SK-N-SH (cell line): ENCODE measurements at regions of chr7 and their contacts with region 1.

Region 1: DNA sequence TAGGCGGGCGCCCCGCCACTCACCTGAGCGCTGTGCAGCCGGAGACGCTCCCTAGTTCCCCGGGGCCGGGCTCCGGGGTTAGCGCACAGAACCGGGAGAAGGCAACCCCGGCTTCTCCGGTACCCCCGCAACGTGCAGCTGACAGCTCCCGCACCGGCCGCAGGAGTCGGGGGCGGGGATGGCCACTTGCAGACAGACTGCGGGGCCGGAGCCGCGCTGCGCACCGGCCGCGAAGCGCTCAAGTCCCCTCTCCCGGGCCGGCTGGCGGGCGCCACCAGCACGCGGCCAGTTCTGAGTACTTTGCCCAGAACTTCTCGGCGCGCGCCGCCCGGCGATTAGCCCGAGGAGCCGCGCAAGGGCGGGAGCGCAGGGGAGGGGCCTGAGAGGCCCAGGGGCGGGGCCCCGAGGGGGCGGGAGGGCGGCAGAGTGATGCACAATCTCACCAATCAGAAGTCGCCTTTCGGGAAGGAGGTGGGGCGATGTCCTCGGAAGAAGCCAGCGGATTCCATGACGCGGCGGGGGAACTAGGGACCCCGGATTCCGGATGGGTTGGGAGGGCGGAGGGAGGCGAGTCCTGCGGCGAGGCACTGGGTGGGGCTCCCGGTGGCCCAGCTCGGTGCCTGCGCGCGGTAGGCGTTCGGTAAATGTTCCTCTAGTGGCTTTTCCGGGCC is at the start of gene OSBPL3:
- DNase-seq: peak; percentile 100
- H3K4me3 ChIP-seq: peak within 1 kb of the TSS; percentile 73 to 97
- H3K27ac ChIP-seq: peak within 1 kb of the TSS; percentile 84 to 87
- H3K4me1 ChIP-seq: peaks cover 21 to 28% of the 10 kb centered on the region in 2 experiments; a peak in 3 of 4 replicates
- H3K27me3 ChIP-seq: no peaks in the 10 kb centered on the region
- CTCF ChIP-seq: no peak
- EP300 ChIP-seq: peak in 1 of 2 experiments; percentile 2; a peak in 1 of 4 replicates
- RAD21 ChIP-seq: peak; percentile 38
- polyA plus RNA-seq, gene OSBPL3: 22.6 and 23.2 TPM in 2 replicates

Region 2: GRCh38 chr7:24819916-24820689 is 159.9 kb before region 1 on chr7:
- CTCF ChIA-PET with region 1: interaction called, 57 read pairs
- POLR2A ChIA-PET with region 1: interaction called, 3 read pairs
- DNase-seq: peak; percentile 77
- H3K4me3 ChIP-seq: no peak overlapping the region
- H3K27ac ChIP-seq: peak overlapping the region; percentile 70 to 93; a peak in 3 of 4 replicates
- H3K4me1 ChIP-seq: peaks cover 5 to 18% of the 10 kb centered on the region in 2 experiments; a peak in 3 of 4 replicates
- H3K27me3 ChIP-seq: no peaks in the 10 kb centered on the region
- CTCF ChIP-seq: peak; percentile 99
- EP300 ChIP-seq: peak in 1 of 2 experiments; percentile 19; a peak in 1 of 4 replicates
- RAD21 ChIP-seq: peak; percentile 98

Region 3: GRCh38 chr7:24836084-24836483 is 143.9 kb before region 1 on chr7:
- CTCF ChIA-PET with region 1: interaction called, 11 read pairs
- POLR2A ChIA-PET with region 1: no interaction called
- DNase-seq: no peak
- H3K4me3 ChIP-seq: no peak overlapping the region
- H3K27ac ChIP-seq: no peak overlapping the region
- H3K4me1 ChIP-seq: peaks cover 0 to 22% of the 10 kb centered on the region in 2 experiments; a peak in 3 of 4 replicates
- H3K27me3 ChIP-seq: no peaks in the 10 kb centered on the region
- CTCF ChIP-seq: no peak
- EP300 ChIP-seq: no peak
- RAD21 ChIP-seq: no peak

Region 4: DNA sequence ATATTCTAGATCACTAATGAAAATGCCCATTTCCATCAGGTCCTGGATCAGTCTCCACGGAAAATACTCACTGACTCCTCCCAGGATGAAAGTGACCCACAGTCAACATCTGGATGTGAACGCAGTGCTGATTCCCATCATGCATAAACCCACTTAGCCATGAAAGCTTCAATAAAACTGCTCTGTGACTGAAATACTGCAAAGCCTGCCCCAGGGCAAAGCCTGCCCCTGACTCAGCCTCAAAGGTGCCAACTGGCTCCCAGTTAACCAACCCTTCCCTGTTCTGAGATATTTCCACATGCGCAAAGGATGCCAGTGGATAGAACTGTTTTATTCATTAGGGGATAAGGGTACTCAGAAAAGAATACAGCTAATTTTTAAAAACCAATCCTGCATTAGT is 24.0 kb before region 1 on chr7:
- CTCF ChIA-PET with region 1: interaction called, 12 read pairs
- POLR2A ChIA-PET with region 1: no interaction called
- DNase-seq: peak; percentile 63
- H3K4me3 ChIP-seq: no peak overlapping the region
- H3K27ac ChIP-seq: no peak overlapping the region
- H3K4me1 ChIP-seq: peaks cover 4 to 11% of the 10 kb centered on the region in 2 experiments; a peak in 3 of 4 replicates
- H3K27me3 ChIP-seq: no peaks in the 10 kb centered on the region
- CTCF ChIP-seq: no peak
- EP300 ChIP-seq: peak in 1 of 2 experiments; percentile 58; a peak in 1 of 4 replicates
- RAD21 ChIP-seq: no peak

Region 5: DNA sequence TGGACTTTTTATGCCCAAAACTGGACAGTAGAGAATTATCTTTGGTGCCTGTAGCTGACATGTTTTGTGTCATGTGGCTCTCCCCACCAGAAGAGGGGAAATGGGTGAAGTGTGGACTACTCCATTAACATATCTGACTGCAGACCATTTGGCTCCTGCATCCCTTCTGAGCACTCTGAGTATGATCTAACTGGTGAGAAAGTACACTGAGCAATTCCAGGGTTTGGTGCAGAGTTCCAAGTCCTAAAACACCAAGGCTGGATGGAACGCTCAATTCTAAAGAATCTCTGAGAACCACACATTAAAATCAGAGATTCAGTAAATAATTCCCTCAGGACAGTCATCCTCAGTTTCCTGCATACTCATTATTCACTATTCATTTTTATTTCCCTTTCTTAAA is 22.8 kb after region 1 on chr7:
- CTCF ChIA-PET with region 1: interaction called, 13 read pairs
- POLR2A ChIA-PET with region 1: no interaction called
- DNase-seq: no peak
- H3K4me3 ChIP-seq: no peak overlapping the region
- H3K27ac ChIP-seq: no peak overlapping the region
- H3K4me1 ChIP-seq: peaks cover 0 to 3% of the 10 kb centered on the region in 2 experiments; a peak in 1 of 4 replicates
- H3K27me3 ChIP-seq: no peaks in the 10 kb centered on the region
- CTCF ChIP-seq: no peak
- EP300 ChIP-seq: no peak
- RAD21 ChIP-seq: no peak